Panc1 (cell line): ENCODE measurements at regions of chr11 and their contacts with region 1.

Region 1: DNA sequence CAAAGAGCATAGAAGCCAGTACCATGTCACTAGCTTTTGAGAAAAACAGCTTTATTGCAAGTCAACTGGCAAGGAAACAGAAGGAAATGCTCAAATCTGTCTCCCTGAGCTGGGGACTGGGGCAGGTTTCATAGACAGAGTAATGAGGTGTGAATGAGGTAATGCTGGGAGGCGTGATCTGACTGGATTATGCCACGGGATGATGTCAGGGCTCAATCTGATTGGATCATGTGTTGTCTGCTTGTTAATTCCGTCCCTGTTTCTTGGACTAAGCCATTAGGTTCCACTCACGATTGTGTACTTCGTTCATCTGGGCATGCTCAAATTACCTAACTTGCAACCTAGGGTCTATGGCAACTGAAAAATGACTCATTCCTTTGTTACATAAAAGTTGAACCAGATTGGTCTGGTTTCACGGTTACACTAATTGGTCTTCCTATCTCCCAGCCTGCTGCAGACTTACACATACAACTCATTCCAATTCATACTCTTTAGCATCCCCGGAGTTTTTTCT is 20.2 kb upstream of the OR10A5 start:
- DNase-seq: no peak
- ATAC-seq: no peak
- H3K4me3 ChIP-seq: no peak overlapping the region
- H3K27ac ChIP-seq: no peak overlapping the region
- H3K4me1 ChIP-seq: no peaks in the 10 kb centered on the region
- H3K27me3 ChIP-seq: no peaks in the 10 kb centered on the region
- CTCF ChIP-seq: no peak

Region 2: DNA sequence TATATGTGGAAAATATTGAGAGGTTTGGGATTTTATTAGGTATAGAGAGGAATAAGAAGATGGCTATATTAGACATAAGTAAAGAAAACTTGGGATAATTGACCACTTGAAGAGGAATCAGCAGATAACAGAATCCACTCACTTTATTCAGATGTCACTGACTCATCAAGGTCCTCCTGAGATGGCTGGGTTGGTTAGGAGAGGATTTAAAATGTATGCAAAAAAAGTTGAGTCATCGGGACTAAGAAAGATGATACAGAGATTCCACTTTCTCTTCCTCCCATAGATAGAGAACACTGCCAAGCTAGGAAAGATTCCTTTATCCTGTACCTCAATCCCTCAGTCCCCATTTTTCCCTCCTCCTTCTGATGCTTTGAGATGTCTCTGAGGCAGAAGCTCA is 25.9 kb before region 1 on chr11 and contains the start of gene OR6A2:
- CTCF ChIA-PET with region 1: no interaction called
- POLR2A ChIA-PET with region 1: interaction called, 10 read pairs
- in situ Hi-C with region 1: no loop called
- intact Hi-C with region 1: no loop called
- DNase-seq: no peak
- ATAC-seq: no peak
- H3K4me3 ChIP-seq: no peak within 1 kb of the TSS
- H3K27ac ChIP-seq: no peak within 1 kb of the TSS
- H3K4me1 ChIP-seq: no peaks in the 10 kb centered on the region
- H3K27me3 ChIP-seq: peaks cover 6% of the 10 kb centered on the region; the same call in 1 of the 2 replicates
- CTCF ChIP-seq: no peak
- total RNA-seq, gene OR6A2: 0.15 TPM